CD8-positive, alpha-beta T cell (primary cell): ENCODE measurements at regions of chr19 and their contacts with region 1.

Region 1: DNA sequence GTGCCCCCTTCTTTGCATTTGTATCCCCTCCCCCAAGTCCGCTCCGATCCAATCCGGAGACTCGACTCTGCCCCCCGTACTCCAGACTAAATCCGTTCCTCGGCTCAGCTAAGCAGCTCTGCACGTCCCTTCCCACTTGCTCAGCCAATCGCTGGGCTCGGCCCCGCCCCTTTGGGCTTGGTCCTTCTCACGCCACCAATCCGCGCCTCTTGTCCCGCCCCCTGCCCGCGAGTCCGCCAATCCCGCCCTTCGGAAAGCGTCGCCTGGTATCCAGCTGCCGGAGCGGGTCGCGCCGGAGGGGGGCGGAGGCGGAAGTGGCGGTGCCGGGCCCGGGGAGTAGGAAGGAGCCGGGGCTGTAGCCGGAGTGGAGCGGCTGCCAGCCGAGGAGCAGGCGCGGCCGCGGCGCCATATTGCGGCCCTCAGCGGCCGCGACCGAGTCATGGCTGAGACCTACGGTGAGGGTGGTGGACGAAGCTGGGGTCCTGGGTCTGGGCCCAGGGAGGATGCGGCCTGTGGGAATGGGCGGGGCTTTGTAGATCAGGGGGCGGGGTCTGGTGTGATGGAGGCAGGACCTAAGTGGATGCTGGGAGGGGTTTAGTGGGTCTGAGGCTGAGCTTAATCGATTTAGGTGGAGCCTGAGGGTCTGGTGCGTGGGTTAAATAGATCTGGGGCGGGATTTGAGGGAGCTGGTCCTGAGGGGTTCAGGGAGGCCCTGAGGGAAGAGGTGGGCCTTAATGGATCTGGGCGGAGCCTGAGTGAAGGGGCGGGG is at the start of gene RAB4B:
- DNase-seq: peak; percentile 100
- ATAC-seq: peak; percentile 83
- H3K4me3 ChIP-seq: peak within 1 kb of the TSS; percentile 87 to 89
- H3K4me3 Mint-ChIP-seq: peak within 1 kb of the TSS; percentile 92
- H3K27ac ChIP-seq: peak within 1 kb of the TSS; percentile 93 to 98
- H3K27ac Mint-ChIP-seq: peak within 1 kb of the TSS; percentile 95
- H3K4me1 ChIP-seq: peaks cover 26% of the 10 kb centered on the region
- H3K4me1 Mint-ChIP-seq: peaks cover 37% of the 10 kb centered on the region
- H3K27me3 ChIP-seq: no peaks in the 10 kb centered on the region
- H3K27me3 Mint-ChIP-seq: no peaks in the 10 kb centered on the region
- CTCF ChIP-seq: no peak
- total RNA-seq, gene RAB4B: 19.9 to 21.3 TPM

Region 2: DNA sequence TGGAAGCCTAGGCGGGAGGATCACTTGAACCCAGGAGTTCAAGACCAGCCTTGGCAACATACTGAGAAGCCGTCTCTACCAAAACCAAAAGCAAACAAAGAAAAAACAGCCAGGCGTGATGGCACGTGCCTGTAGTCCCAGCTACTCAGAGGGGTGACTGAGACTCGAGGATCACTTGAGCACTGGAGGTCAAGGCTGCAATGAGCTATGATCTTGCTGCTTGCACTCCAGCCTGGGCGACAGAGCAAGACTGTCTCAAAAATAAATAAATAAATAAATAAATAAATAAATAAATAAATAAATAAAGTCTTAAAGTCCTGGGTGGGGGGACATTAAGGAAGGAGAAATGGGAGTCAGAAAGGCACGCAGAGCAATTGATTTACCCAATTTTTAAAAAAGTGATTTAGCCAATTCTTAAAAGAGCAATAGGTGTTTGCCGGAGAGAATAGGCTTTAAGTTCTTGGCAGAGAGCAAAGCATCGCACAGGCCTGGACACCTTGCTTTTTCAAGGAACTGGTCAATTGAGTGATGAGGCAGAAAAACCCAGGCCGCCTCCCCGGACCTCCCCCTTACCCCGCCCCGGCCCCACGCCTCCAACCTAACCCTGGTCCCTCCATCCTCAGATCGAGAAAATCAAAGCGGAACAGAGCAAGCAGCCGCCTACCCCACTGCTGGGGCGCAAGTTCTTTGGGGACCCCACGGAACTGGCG is 210.9 kb before region 1 on chr19:
- CTCF ChIA-PET with region 1: no interaction called
- POLR2A ChIA-PET with region 1: no interaction called
- intact Hi-C with region 1: no loop called
- DNase-seq: no peak
- ATAC-seq: no peak
- H3K4me3 ChIP-seq: no peak overlapping the region
- H3K4me3 Mint-ChIP-seq: no peak overlapping the region
- H3K27ac ChIP-seq: no peak overlapping the region
- H3K27ac Mint-ChIP-seq: no peak overlapping the region
- H3K4me1 ChIP-seq: peaks cover 18% of the 10 kb centered on the region
- H3K4me1 Mint-ChIP-seq: peaks cover 13% of the 10 kb centered on the region
- H3K27me3 ChIP-seq: peaks cover 12 to 14% of the 10 kb centered on the region in 2 experiments
- H3K27me3 Mint-ChIP-seq: peaks cover 26% of the 10 kb centered on the region
- CTCF ChIP-seq: no peak

Region 3: GRCh38 chr19:40690693-40691420 is 87.3 kb before region 1 on chr19:
- CTCF ChIA-PET with region 1: no interaction called
- POLR2A ChIA-PET with region 1: no interaction called
- intact Hi-C with region 1: loop called (anchors 1 kb)
- DNase-seq: peak; percentile 67 to 93 (median 85)
- ATAC-seq: peak; percentile 88
- H3K4me3 ChIP-seq: peak overlapping the region; percentile 65 to 76
- H3K4me3 Mint-ChIP-seq: peak overlapping the region; percentile 88
- H3K27ac ChIP-seq: peak overlapping the region in 1 of 2 experiments; percentile 40
- H3K27ac Mint-ChIP-seq: peak overlapping the region; percentile 75
- H3K4me1 ChIP-seq: peaks cover 23% of the 10 kb centered on the region
- H3K4me1 Mint-ChIP-seq: peaks cover 7% of the 10 kb centered on the region
- H3K27me3 ChIP-seq: peaks cover 0 to 3% of the 10 kb centered on the region in 2 experiments
- H3K27me3 Mint-ChIP-seq: no peaks in the 10 kb centered on the region
- CTCF ChIP-seq: no peak

Region 4: DNA sequence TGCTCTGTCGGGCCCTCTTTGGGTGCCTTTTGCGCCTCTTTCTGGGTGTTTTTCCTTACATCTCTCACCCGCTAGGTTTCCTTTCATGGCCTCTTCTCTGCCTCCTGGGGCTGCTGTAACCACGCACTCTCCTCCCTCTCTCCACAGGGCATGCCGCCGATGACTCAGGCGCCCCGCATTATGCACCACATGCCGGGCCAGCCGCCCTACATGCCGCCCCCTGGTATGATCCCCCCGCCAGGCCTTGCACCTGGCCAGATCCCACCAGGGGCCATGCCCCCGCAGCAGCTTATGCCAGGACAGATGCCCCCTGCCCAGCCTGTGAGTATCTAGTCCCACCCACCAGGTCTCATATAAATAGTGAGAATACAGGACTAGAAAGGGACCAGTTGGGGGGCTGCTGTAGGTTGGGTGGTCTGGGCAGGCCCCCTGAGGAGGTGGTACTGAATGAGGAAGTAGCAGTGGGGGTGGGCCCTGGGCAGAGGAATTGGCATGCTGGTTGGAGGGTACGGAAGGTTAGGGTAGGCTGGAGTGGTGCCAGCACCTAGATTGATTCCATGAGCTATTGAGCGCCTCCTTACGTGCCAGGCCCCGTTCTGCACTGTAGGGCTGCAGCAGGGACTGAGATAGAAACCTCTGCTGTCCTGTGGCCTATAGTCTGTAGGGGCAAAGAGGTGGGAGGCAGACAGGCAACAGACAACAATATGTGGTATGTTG is 15.2 kb before region 1 on chr19:
- CTCF ChIA-PET with region 1: interaction called, 3 read pairs
- POLR2A ChIA-PET with region 1: interaction called, 7 read pairs
- intact Hi-C with region 1: loop called in 1 of 2 experiments (anchors 2 kb)
- DNase-seq: peak in 3 of 9 experiments; percentile 24 to 51 (median 37)
- ATAC-seq: peak; percentile 61
- H3K4me3 ChIP-seq: no peak overlapping the region
- H3K4me3 Mint-ChIP-seq: peak overlapping the region; percentile 11
- H3K27ac ChIP-seq: peak overlapping the region; percentile 1 to 55
- H3K27ac Mint-ChIP-seq: peak overlapping the region; percentile 91
- H3K4me1 ChIP-seq: peaks cover 41% of the 10 kb centered on the region
- H3K4me1 Mint-ChIP-seq: peaks cover 58% of the 10 kb centered on the region
- H3K27me3 ChIP-seq: no peaks in the 10 kb centered on the region
- H3K27me3 Mint-ChIP-seq: no peaks in the 10 kb centered on the region
- CTCF ChIP-seq: no peak

Region 5: DNA sequence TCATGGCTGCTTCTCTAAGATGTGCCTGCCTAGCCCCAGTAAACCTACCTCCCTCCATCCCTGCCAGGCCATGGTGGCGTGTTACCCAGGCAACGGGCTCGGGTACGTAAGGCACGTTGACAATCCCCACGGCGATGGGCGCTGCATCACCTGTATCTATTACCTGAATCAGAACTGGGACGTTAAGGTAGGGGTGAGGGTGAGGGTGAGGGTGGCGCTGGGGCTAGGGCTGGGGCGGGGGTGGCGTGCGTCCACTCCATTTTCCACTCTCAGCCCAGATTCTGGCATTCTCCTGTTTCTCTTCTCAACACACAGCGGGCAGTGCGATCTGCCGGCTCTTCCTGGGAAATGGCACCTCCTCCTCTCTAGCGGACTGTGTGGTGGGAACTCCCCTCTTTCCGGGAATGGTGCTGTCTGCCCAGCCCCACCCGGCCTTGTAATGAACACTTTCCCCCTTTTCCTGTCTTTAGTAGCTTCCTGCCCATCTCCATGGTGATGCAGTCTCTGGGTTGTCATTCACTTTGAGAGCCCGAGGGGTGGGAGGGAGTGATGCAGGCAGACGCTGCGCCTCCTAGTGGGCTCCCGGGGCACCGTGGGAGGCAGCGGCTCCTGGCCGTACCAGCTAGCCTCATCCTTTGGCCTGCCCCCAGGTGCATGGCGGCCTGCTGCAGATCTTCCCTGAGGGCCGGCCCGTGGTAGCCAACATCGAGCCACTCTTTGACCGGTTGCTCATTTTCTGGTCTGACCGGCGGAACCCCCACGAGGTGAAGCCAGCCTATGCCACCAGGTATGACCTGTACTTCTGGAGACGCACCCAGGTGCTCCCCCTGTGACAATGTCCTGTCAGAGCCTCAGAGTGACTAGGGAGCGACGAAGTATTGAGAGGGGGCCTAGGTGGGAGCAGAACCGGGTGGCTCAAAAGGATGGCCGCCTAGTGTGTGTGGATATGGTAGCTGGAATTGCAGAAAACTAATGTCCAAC is 28.7 kb after region 1 on chr19:
- CTCF ChIA-PET with region 1: interaction called, 32 read pairs
- POLR2A ChIA-PET with region 1: interaction called, 61 read pairs
- intact Hi-C with region 1: loop called in 1 of 2 experiments (anchors 1 kb)
- DNase-seq: peak; percentile 54 to 95 (median 81)
- ATAC-seq: peak; percentile 48
- H3K4me3 ChIP-seq: peak overlapping the region in 1 of 2 experiments; percentile 35
- H3K4me3 Mint-ChIP-seq: peak overlapping the region; percentile 83
- H3K27ac ChIP-seq: peak overlapping the region; percentile 66 to 88
- H3K27ac Mint-ChIP-seq: peak overlapping the region; percentile 99
- H3K4me1 ChIP-seq: peaks cover 86% of the 10 kb centered on the region
- H3K4me1 Mint-ChIP-seq: peaks cover 87% of the 10 kb centered on the region
- H3K27me3 ChIP-seq: no peaks in the 10 kb centered on the region
- H3K27me3 Mint-ChIP-seq: no peaks in the 10 kb centered on the region
- CTCF ChIP-seq: peak; percentile 87

Region 6: DNA sequence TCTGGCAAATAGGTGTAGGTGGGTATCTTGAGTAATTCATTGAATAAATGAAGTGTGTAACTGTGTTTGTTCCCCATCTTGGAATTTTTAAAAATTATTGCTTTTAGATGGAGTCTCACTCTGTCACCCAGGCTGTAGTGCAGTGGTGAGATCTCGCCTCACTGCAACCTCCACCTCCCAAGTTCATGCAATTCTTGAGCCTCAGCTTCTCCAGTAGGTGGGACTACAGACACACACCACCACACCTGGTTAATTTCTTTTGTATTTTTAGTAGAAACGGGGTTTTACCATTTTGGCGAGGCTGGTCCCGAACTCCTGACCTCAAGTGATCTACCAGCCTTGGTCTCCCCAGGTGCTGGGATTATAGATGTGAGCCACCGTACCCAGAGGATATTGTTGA is 80.0 kb after region 1 on chr19:
- CTCF ChIA-PET with region 1: no interaction called
- POLR2A ChIA-PET with region 1: no interaction called
- intact Hi-C with region 1: no loop called
- DNase-seq: no peak
- ATAC-seq: no peak
- H3K4me3 ChIP-seq: no peak overlapping the region
- H3K4me3 Mint-ChIP-seq: no peak overlapping the region
- H3K27ac ChIP-seq: no peak overlapping the region
- H3K27ac Mint-ChIP-seq: no peak overlapping the region
- H3K4me1 ChIP-seq: no peaks in the 10 kb centered on the region
- H3K4me1 Mint-ChIP-seq: no peaks in the 10 kb centered on the region
- H3K27me3 ChIP-seq: peaks cover 0 to 2% of the 10 kb centered on the region in 2 experiments
- H3K27me3 Mint-ChIP-seq: peaks cover 6% of the 10 kb centered on the region
- CTCF ChIP-seq: no peak